CD8-positive, alpha-beta T cell (primary cell): ENCODE measurements at regions of chr1 and their contacts with region 1.

Region 1: GRCh38 chr1:70948396-70949017 is 99.1 kb downstream of the PTGER3 start:
- DNase-seq: no peak
- ATAC-seq: no peak
- H3K4me3 ChIP-seq: no peak overlapping the region
- H3K4me3 Mint-ChIP-seq: no peak overlapping the region
- H3K27ac ChIP-seq: no peak overlapping the region
- H3K27ac Mint-ChIP-seq: no peak overlapping the region
- H3K4me1 ChIP-seq: no peaks in the 10 kb centered on the region
- H3K4me1 Mint-ChIP-seq: no peaks in the 10 kb centered on the region
- H3K27me3 ChIP-seq: no peaks in the 10 kb centered on the region
- H3K27me3 Mint-ChIP-seq: peaks cover 3% of the 10 kb centered on the region
- CTCF ChIP-seq: no peak

Region 2: DNA sequence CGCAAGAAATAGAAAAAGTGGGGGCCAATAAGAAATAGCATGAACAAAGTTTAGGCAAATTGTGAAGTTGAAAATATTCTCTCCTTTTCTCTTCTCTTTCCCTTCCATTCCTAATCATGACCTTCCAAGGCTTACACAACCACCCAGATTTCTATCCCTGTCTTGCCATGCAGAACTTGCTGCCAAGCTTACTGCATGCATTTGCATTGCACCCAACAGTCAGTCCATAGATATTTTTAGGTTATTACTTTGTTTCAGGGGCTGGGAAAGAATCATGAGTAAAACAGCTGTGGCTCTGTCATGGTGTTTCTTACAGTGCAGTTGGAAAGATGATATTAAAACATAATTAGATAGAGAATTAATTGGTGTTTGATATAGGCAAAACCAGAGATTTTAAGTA is 120.3 kb before region 1 on chr1:
- CTCF ChIA-PET with region 1: no interaction called
- POLR2A ChIA-PET with region 1: no interaction called
- intact Hi-C with region 1: no loop called
- DNase-seq: no peak
- ATAC-seq: no peak
- H3K4me3 ChIP-seq: no peak overlapping the region
- H3K4me3 Mint-ChIP-seq: no peak overlapping the region
- H3K27ac ChIP-seq: no peak overlapping the region
- H3K27ac Mint-ChIP-seq: no peak overlapping the region
- H3K4me1 ChIP-seq: no peaks in the 10 kb centered on the region
- H3K4me1 Mint-ChIP-seq: no peaks in the 10 kb centered on the region
- H3K27me3 ChIP-seq: no peaks in the 10 kb centered on the region
- H3K27me3 Mint-ChIP-seq: no peaks in the 10 kb centered on the region
- CTCF ChIP-seq: no peak

Region 3: DNA sequence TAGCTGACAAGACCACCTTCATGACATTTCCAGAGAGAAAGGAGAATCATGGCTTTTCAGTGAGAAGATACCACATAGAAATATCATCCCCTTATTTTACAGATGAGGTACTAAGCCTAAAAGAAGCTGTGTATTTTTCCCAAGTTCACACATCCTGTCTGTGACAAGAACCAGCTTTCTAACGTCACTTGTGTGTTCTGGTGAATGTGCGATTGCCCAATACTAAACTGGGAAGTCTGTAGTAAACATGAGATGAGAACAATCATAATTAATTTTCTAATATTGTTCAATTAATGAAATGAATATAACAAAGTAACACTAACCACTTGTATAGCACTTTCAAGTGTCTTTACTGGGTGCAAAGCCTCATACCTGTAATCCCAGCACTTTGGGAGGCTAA is 53.1 kb after region 1 on chr1:
- CTCF ChIA-PET with region 1: no interaction called
- POLR2A ChIA-PET with region 1: no interaction called
- intact Hi-C with region 1: loop called in 1 of 2 experiments (anchors 5 kb)
- DNase-seq: no peak
- ATAC-seq: no peak
- H3K4me3 ChIP-seq: no peak overlapping the region
- H3K4me3 Mint-ChIP-seq: no peak overlapping the region
- H3K27ac ChIP-seq: no peak overlapping the region
- H3K27ac Mint-ChIP-seq: no peak overlapping the region
- H3K4me1 ChIP-seq: no peaks in the 10 kb centered on the region
- H3K4me1 Mint-ChIP-seq: no peaks in the 10 kb centered on the region
- H3K27me3 ChIP-seq: no peaks in the 10 kb centered on the region
- H3K27me3 Mint-ChIP-seq: peaks cover 5% of the 10 kb centered on the region
- CTCF ChIP-seq: no peak